CD8-positive, alpha-beta T cell (primary cell): ENCODE measurements at regions of chr2 and their contacts with region 1.

Region 1: DNA sequence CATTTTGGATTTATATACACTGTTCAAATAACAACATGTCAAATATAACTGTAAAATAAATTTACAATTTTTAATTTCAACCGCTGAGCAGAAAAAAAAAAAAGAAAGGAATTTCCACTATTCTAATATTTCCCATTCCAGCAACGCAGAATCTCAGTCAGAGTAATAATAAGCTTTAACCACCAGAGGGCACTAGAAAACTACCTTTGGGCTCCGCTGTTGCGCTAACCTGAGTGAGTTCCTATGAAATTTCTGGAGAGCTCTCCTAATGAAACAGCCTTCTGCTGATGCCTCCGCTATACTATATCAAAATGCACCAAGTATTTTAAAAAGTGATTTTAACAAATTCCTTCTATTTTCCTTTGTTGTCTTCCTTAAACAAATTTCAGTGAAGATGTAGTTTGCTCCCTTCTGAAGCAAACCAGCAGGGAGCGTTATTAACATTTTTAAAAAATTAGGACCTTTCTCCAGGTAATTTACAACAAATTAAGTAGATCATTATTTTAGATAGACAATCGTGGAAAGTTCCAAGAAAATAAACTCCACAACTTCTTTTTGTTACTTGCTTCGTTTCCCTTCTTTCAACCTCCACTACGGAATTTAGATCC is 23.0 kb downstream of the ERMN start:
- DNase-seq: peak in 7 of 9 experiments; percentile 2 to 71 (median 18)
- ATAC-seq: peak; percentile 89
- H3K4me3 ChIP-seq: no peak overlapping the region
- H3K4me3 Mint-ChIP-seq: no peak overlapping the region
- H3K27ac ChIP-seq: no peak overlapping the region
- H3K27ac Mint-ChIP-seq: no peak overlapping the region
- H3K4me1 ChIP-seq: no peaks in the 10 kb centered on the region
- H3K4me1 Mint-ChIP-seq: peaks cover 17% of the 10 kb centered on the region
- H3K27me3 ChIP-seq: no peaks in the 10 kb centered on the region
- H3K27me3 Mint-ChIP-seq: peaks cover 3% of the 10 kb centered on the region
- CTCF ChIP-seq: peak; percentile 89

Region 2: GRCh38 chr2:157312866-157313486 is 10.4 kb after region 1 on chr2:
- CTCF ChIA-PET with region 1: interaction called, 23 read pairs
- POLR2A ChIA-PET with region 1: no interaction called
- intact Hi-C with region 1: no loop called
- DNase-seq: no peak
- ATAC-seq: no peak
- H3K4me3 ChIP-seq: no peak overlapping the region
- H3K4me3 Mint-ChIP-seq: no peak overlapping the region
- H3K27ac ChIP-seq: no peak overlapping the region
- H3K27ac Mint-ChIP-seq: no peak overlapping the region
- H3K4me1 ChIP-seq: no peaks in the 10 kb centered on the region
- H3K4me1 Mint-ChIP-seq: no peaks in the 10 kb centered on the region
- H3K27me3 ChIP-seq: no peaks in the 10 kb centered on the region
- H3K27me3 Mint-ChIP-seq: no peaks in the 10 kb centered on the region
- CTCF ChIP-seq: no peak

Region 3: GRCh38 chr2:157363612-157364101 is 61.1 kb after region 1 on chr2:
- CTCF ChIA-PET with region 1: no interaction called
- POLR2A ChIA-PET with region 1: no interaction called
- intact Hi-C with region 1: no loop called
- DNase-seq: peak in 1 of 9 experiments; percentile 33
- ATAC-seq: no peak
- H3K4me3 ChIP-seq: no peak overlapping the region
- H3K4me3 Mint-ChIP-seq: peak overlapping the region; percentile 6
- H3K27ac ChIP-seq: peak overlapping the region in 1 of 2 experiments; percentile 34
- H3K27ac Mint-ChIP-seq: peak overlapping the region; percentile 29
- H3K4me1 ChIP-seq: peaks cover 29% of the 10 kb centered on the region
- H3K4me1 Mint-ChIP-seq: peaks cover 46% of the 10 kb centered on the region
- H3K27me3 ChIP-seq: no peaks in the 10 kb centered on the region
- H3K27me3 Mint-ChIP-seq: no peaks in the 10 kb centered on the region
- CTCF ChIP-seq: no peak

Region 4: GRCh38 chr2:157492189-157492773 is 189.7 kb after region 1 on chr2:
- CTCF ChIA-PET with region 1: interaction called, 77 read pairs
- POLR2A ChIA-PET with region 1: no interaction called
- intact Hi-C with region 1: loop called in 1 of 2 experiments (anchors 2 kb)
- DNase-seq: peak; percentile 53 to 84 (median 73)
- ATAC-seq: peak; percentile 94
- H3K4me3 ChIP-seq: no peak overlapping the region
- H3K4me3 Mint-ChIP-seq: no peak overlapping the region
- H3K27ac ChIP-seq: no peak overlapping the region
- H3K27ac Mint-ChIP-seq: no peak overlapping the region
- H3K4me1 ChIP-seq: peaks cover 4% of the 10 kb centered on the region
- H3K4me1 Mint-ChIP-seq: peaks cover 38% of the 10 kb centered on the region
- H3K27me3 ChIP-seq: no peaks in the 10 kb centered on the region
- H3K27me3 Mint-ChIP-seq: no peaks in the 10 kb centered on the region
- CTCF ChIP-seq: peak; percentile 86

Region 5: GRCh38 chr2:157628477-157629415 is 326.1 kb after region 1 on chr2 and contains the start of gene ACVR1C:
- CTCF ChIA-PET with region 1: interaction called, 18 read pairs
- POLR2A ChIA-PET with region 1: interaction called, 3 read pairs
- intact Hi-C with region 1: loop called in 1 of 2 experiments (anchors 1 kb)
- DNase-seq: peak; percentile 32 to 89 (median 62)
- ATAC-seq: peak; percentile 81
- H3K4me3 ChIP-seq: peak within 1 kb of the TSS; percentile 65 to 81
- H3K4me3 Mint-ChIP-seq: peak within 1 kb of the TSS; percentile 96
- H3K27ac ChIP-seq: peak within 1 kb of the TSS in 1 of 2 experiments; percentile 42
- H3K27ac Mint-ChIP-seq: peak within 1 kb of the TSS; percentile 76
- H3K4me1 ChIP-seq: peaks cover 29% of the 10 kb centered on the region
- H3K4me1 Mint-ChIP-seq: peaks cover 37% of the 10 kb centered on the region
- H3K27me3 ChIP-seq: no peaks in the 10 kb centered on the region
- H3K27me3 Mint-ChIP-seq: no peaks in the 10 kb centered on the region
- CTCF ChIP-seq: peak; percentile 26
- total RNA-seq, gene ACVR1C: 2.3 to 2.4 TPM

Region 6: DNA sequence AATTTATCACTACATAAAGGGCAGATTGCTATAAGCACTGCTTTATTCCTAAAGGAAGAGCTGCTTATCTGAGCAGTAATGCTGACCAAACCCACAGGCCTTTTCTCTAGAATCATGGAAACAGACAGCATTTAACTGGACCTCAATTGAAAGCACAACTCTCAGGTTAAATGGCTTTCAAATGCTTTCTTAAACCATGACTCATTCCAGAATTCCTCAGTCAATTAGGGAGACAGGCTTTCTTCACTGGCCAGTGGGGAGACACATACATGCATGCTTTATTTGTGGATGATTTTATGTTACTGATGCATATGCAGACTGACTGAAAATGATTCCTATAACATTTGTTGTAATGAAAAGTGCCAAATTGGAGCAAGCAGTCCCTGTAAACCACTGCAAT is 458.9 kb after region 1 on chr2:
- CTCF ChIA-PET with region 1: interaction called, 4 read pairs
- POLR2A ChIA-PET with region 1: no interaction called
- intact Hi-C with region 1: loop called (anchors 1 to 5 kb)
- DNase-seq: no peak
- ATAC-seq: no peak
- H3K4me3 ChIP-seq: no peak overlapping the region
- H3K4me3 Mint-ChIP-seq: no peak overlapping the region
- H3K27ac ChIP-seq: no peak overlapping the region
- H3K27ac Mint-ChIP-seq: no peak overlapping the region
- H3K4me1 ChIP-seq: no peaks in the 10 kb centered on the region
- H3K4me1 Mint-ChIP-seq: no peaks in the 10 kb centered on the region
- H3K27me3 ChIP-seq: no peaks in the 10 kb centered on the region
- H3K27me3 Mint-ChIP-seq: no peaks in the 10 kb centered on the region
- CTCF ChIP-seq: no peak

Region 7: GRCh38 chr2:158456309-158457066 is 1153.9 kb after region 1 on chr2 and contains the starts of genes CCDC148 and PKP4:
- CTCF ChIA-PET with region 1: no interaction called
- POLR2A ChIA-PET with region 1: no interaction called
- intact Hi-C with region 1: loop called in 1 of 2 experiments (anchors 10 kb)
- DNase-seq: peak; percentile 74 to 97 (median 86)
- ATAC-seq: peak; percentile 91
- H3K4me3 ChIP-seq: peak within 1 kb of the TSS; percentile 69 to 81
- H3K4me3 Mint-ChIP-seq: peak within 1 kb of the TSS; percentile 96
- H3K27ac ChIP-seq: peak within 1 kb of the TSS; percentile 23 to 49
- H3K27ac Mint-ChIP-seq: peak within 1 kb of the TSS; percentile 76
- H3K4me1 ChIP-seq: peaks cover 12% of the 10 kb centered on the region
- H3K4me1 Mint-ChIP-seq: peaks cover 16% of the 10 kb centered on the region
- H3K27me3 ChIP-seq: no peaks in the 10 kb centered on the region
- H3K27me3 Mint-ChIP-seq: peaks cover 13% of the 10 kb centered on the region
- CTCF ChIP-seq: no peak
- total RNA-seq, gene CCDC148: not detected
- total RNA-seq, gene PKP4: 5.7 to 8.1 TPM